Activated CD4-positive, alpha-beta memory T cell treated with anti-CD3 and anti-CD28 coated beads for 36 hours (primary cell): ENCODE measurements at regions of chr4 and their contacts with region 1.

Region 1: DNA sequence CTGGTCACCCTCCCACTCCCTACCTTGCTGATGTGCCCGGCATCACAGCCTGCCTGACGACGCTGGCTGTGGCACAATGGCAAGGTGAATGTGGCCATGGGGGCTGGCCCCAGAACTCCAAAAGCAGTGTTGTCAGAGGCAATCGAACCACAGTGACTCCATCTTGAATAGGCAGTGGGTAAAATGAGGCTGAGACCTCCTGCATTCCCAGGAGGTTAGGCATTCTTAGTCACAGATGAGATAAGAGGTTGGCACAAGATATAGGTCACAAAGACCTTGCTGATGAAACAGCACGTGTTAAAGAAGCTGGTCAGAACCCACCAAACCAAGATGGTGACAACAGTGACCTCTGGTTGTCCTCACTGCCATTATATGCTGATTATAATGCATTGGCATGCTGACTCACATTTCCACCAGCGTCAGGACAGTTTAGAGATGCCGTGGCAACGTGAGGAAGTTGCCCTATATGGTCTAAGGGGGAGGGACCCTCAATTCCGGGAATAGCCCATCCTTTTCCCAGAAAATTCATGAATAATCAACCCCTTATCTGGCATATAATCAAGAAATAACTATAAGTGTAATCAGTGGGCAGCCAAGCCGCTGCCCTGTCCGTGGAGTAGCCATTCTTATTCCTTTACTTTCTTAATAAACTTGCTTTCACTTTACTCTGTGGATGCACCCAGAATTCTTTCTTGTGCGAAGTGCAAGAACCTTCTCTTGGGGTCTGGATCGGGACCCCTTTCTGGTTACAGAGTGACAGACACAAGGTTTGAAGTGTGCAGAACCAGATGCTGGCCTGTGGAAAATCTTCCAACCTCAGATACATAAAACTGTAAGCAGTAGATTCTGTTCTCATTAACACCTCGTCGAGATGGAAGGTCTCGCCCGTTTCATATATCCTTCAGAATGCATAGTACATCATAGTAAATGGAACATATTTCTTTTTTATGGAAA is 26.8 kb upstream of the CLDN24 start:
- DNase-seq: peak; percentile 75
- H3K4me3 Mint-ChIP-seq: no peak overlapping the region
- H3K27ac Mint-ChIP-seq: peak overlapping the region; percentile 56
- H3K4me1 Mint-ChIP-seq: peaks cover 16% of the 10 kb centered on the region
- H3K27me3 Mint-ChIP-seq: peaks cover 35% of the 10 kb centered on the region

Region 2: GRCh38 chr4:183335369-183335940 is 13.5 kb before region 1 on chr4:
- CTCF ChIA-PET with region 1: no interaction called
- POLR2A ChIA-PET with region 1: no interaction called
- intact Hi-C with region 1: loop called (anchors 1 kb)
- DNase-seq: no peak
- H3K4me3 Mint-ChIP-seq: no peak overlapping the region
- H3K27ac Mint-ChIP-seq: no peak overlapping the region
- H3K4me1 Mint-ChIP-seq: peaks cover 5% of the 10 kb centered on the region
- H3K27me3 Mint-ChIP-seq: peaks cover 13% of the 10 kb centered on the region

Region 3: GRCh38 chr4:183396227-183396637 is 47.2 kb after region 1 on chr4:
- CTCF ChIA-PET with region 1: no interaction called
- POLR2A ChIA-PET with region 1: no interaction called
- intact Hi-C with region 1: loop called (anchors 1 kb)
- DNase-seq: no peak
- H3K4me3 Mint-ChIP-seq: no peak overlapping the region
- H3K27ac Mint-ChIP-seq: no peak overlapping the region
- H3K4me1 Mint-ChIP-seq: peaks cover 18% of the 10 kb centered on the region
- H3K27me3 Mint-ChIP-seq: peaks cover 8% of the 10 kb centered on the region